Endothelial cell of umbilical vein (primary cell): ENCODE measurements at regions of chr1 and their contacts with region 1.

Region 1: GRCh38 chr1:43414634-43415223 is 25.0 kb downstream of the SZT2 start:
- DNase-seq: peak; percentile 81
- H3K4me3 ChIP-seq: no peak overlapping the region
- H3K27ac ChIP-seq: no peak overlapping the region
- H3K4me1 ChIP-seq: peaks cover 7% of the 10 kb centered on the region
- H3K27me3 ChIP-seq: no peaks in the 10 kb centered on the region
- CTCF ChIP-seq: peak; percentile 68 to 79
- POLR2A ChIP-seq: no peak

Region 2: DNA sequence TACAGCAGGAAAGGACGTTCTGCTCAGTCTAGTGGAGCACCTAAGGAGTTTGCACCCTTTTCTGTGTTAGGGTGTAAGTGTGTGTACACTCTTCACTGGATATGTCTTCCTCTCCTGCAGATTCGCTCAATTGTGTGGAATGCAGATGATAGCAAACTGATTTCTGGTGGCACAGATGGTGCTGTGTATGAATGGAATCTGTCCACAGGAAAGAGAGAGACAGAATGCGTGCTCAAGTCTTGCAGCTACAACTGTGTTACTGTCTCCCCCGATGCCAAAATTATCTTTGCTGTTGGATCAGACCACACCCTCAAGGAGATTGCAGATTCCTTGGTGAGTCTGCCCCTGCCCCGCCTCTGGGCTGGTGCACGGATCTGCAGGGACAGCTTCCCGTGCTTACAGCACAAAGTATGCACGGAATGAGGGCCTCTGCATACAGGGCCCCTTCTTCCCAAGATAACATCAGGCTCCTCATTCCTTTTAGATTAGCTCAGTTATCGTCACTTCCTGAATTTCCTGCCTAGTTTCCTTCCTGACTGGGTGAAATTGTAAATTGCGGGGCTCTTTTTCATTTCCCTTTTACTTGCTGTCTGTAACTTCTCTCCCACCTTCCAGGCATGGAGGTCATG is 208.0 kb before region 1 on chr1:
- CTCF ChIA-PET with region 1: interaction called, 15 read pairs
- POLR2A ChIA-PET with region 1: no interaction called
- dilution Hi-C with region 1: no loop called
- intact Hi-C with region 1: no loop called
- DNase-seq: no peak
- H3K4me3 ChIP-seq: peak overlapping the region in 1 of 3 experiments; percentile 7
- H3K27ac ChIP-seq: peak overlapping the region; percentile 97
- H3K4me1 ChIP-seq: peaks cover 27% of the 10 kb centered on the region
- H3K27me3 ChIP-seq: no peaks in the 10 kb centered on the region
- CTCF ChIP-seq: no peak
- POLR2A ChIP-seq: peak; percentile 92

Region 3: DNA sequence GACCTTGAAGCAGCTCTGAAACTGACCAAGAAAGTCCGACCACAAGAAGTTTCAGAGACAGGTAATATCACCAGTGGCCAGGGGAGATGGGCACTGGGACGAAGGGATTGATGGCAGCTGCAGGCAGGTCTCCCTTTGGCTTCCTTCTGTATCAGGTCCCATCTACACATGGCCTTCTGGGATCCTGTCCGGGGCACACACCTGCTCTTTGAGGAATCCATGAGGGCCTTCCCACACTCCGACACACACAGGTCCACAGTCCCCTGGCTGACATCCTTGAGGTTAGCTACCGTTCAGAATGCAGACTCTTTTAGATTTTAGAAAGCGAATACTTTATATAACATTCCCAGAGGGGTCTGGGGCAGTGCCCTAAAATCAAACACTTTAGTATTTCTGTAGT is 171.4 kb before region 1 on chr1:
- CTCF ChIA-PET with region 1: interaction called, 74 read pairs
- POLR2A ChIA-PET with region 1: no interaction called
- dilution Hi-C with region 1: loop called (anchors 25 kb)
- intact Hi-C with region 1: loop called (anchors 1 kb)
- DNase-seq: no peak
- H3K4me3 ChIP-seq: no peak overlapping the region
- H3K27ac ChIP-seq: no peak overlapping the region
- H3K4me1 ChIP-seq: peaks cover 5% of the 10 kb centered on the region
- H3K27me3 ChIP-seq: no peaks in the 10 kb centered on the region
- CTCF ChIP-seq: no peak
- POLR2A ChIP-seq: no peak

Region 4: GRCh38 chr1:43358746-43359693 is 55.7 kb before region 1 on chr1 and contains the start of gene CDC20:
- CTCF ChIA-PET with region 1: interaction called, 14 read pairs
- POLR2A ChIA-PET with region 1: no interaction called
- dilution Hi-C with region 1: no loop called
- intact Hi-C with region 1: no loop called
- DNase-seq: peak; percentile 98
- H3K4me3 ChIP-seq: peak within 1 kb of the TSS; percentile 57 to 84 (median 80)
- H3K27ac ChIP-seq: peak within 1 kb of the TSS; percentile 80
- H3K4me1 ChIP-seq: peaks cover 38% of the 10 kb centered on the region
- H3K27me3 ChIP-seq: no peaks in the 10 kb centered on the region
- CTCF ChIP-seq: no peak
- POLR2A ChIP-seq: no peak
- total RNA-seq, gene CDC20: 156 and 170 TPM in 2 replicates

Region 5: DNA sequence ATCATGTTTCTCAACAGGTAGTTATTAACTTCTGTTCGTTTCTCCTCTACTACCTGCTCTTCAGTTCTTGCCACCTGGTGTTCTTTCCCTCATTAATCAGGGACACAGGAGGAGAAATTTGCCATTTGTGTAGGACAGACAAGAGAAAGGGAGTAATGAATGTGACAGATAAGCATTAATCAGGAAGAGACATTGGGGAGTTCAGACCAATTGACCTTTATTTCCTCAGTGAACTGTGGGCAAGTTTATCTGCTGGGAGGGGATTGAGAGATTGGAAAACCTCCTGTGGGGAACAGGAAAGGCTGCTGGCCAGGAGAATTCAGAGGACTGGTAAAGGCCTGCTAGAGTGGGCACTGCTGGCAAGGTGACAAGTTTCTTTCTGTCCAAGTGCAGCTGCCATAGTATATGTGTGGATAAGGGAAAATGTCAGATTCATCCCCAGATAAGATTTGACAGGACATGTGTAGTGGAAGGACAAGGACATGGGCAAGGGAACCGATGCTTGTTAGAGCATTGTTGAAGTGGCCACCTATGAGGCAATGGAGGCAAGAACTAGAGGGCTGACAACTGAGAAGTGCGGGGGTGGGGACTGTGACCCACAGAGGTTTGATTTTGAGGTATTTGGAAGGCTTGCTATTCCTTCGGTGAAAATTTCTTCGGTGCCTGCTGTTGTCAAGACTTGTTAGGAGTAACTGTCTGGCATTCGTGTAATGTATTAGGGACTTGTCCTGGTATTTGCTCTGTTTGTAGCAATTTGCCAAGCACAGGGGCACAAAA is 12.5 kb before region 1 on chr1:
- CTCF ChIA-PET with region 1: interaction called, 14 read pairs
- POLR2A ChIA-PET with region 1: no interaction called
- dilution Hi-C with region 1: no loop called
- intact Hi-C with region 1: no loop called
- DNase-seq: peak; percentile 23
- H3K4me3 ChIP-seq: no peak overlapping the region
- H3K27ac ChIP-seq: no peak overlapping the region
- H3K4me1 ChIP-seq: no peaks in the 10 kb centered on the region
- H3K27me3 ChIP-seq: no peaks in the 10 kb centered on the region
- CTCF ChIP-seq: no peak
- POLR2A ChIP-seq: no peak